CD14-positive monocyte (primary cell): ENCODE measurements at regions of chr1 and their contacts with region 1.

Region 1: GRCh38 chr1:231757101-231757404 is 130.5 kb downstream of the DISC1 start:
- DNase-seq: peak in 1 of 3 donors; percentile 68
- H3K4me3 ChIP-seq: peak overlapping the region; percentile 16 to 71 (median 59)
- H3K4me3 Mint-ChIP-seq: peak overlapping the region; percentile 70 to 79
- H3K27ac ChIP-seq: peak overlapping the region in 1 of 2 donors; percentile 78
- H3K27ac Mint-ChIP-seq: peak overlapping the region; percentile 30 to 91 (median 86)
- H3K4me1 ChIP-seq: peaks cover 16 to 21% of the 10 kb centered on the region in 2 donors
- H3K4me1 Mint-ChIP-seq: peaks cover 22% of the 10 kb centered on the region
- H3K27me3 ChIP-seq: no peaks in the 10 kb centered on the region
- H3K27me3 Mint-ChIP-seq: no peaks in the 10 kb centered on the region
- CTCF ChIP-seq: peak; percentile 69

Region 2: DNA sequence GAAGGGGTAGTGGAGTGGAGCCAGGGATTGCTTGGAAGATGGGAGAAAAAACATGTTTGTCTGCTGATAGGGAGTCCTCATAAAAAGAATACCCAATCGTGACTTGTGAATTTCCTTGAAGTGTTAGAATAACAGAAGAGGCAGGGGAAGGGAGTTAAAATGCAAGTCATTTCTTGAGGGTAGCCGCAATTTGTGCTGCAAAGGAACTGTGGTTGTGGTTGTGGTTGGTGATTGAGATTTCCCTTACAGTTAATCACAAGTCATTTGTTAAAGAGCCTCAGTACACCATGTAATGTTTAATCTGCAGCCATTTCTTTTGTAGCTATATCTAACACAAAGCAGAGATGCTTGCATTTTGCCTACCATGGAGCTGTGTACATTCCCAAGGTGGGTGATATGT is 296.4 kb before region 1 on chr1:
- intact Hi-C with region 1: no loop called
- DNase-seq: peak; percentile 53 to 71 (median 58)
- H3K4me3 ChIP-seq: no peak overlapping the region
- H3K4me3 Mint-ChIP-seq: peak overlapping the region in 1 of 2 donors; percentile 77
- H3K27ac ChIP-seq: no peak overlapping the region
- H3K27ac Mint-ChIP-seq: peak overlapping the region in 1 of 7 donors; percentile 7
- H3K4me1 ChIP-seq: peaks cover 13 to 16% of the 10 kb centered on the region in 2 donors
- H3K4me1 Mint-ChIP-seq: peaks cover 17% of the 10 kb centered on the region
- H3K27me3 ChIP-seq: peaks cover 87 to 96% of the 10 kb centered on the region in 2 donors
- H3K27me3 Mint-ChIP-seq: peaks cover 83 to 92% (median 88%) of the 10 kb centered on the region in 3 donors
- CTCF ChIP-seq: no peak

Region 3: GRCh38 chr1:231684356-231685244 is 72.5 kb before region 1 on chr1:
- intact Hi-C with region 1: no loop called
- DNase-seq: no peak
- H3K4me3 ChIP-seq: no peak overlapping the region
- H3K4me3 Mint-ChIP-seq: no peak overlapping the region
- H3K27ac ChIP-seq: no peak overlapping the region
- H3K27ac Mint-ChIP-seq: peak overlapping the region in 1 of 7 donors; percentile 25
- H3K4me1 ChIP-seq: no peaks in the 10 kb centered on the region
- H3K4me1 Mint-ChIP-seq: peaks cover 18% of the 10 kb centered on the region
- H3K27me3 ChIP-seq: no peaks in the 10 kb centered on the region
- H3K27me3 Mint-ChIP-seq: peaks cover 0 to 2% (median 0%) of the 10 kb centered on the region in 3 donors
- CTCF ChIP-seq: no peak

Region 4: DNA sequence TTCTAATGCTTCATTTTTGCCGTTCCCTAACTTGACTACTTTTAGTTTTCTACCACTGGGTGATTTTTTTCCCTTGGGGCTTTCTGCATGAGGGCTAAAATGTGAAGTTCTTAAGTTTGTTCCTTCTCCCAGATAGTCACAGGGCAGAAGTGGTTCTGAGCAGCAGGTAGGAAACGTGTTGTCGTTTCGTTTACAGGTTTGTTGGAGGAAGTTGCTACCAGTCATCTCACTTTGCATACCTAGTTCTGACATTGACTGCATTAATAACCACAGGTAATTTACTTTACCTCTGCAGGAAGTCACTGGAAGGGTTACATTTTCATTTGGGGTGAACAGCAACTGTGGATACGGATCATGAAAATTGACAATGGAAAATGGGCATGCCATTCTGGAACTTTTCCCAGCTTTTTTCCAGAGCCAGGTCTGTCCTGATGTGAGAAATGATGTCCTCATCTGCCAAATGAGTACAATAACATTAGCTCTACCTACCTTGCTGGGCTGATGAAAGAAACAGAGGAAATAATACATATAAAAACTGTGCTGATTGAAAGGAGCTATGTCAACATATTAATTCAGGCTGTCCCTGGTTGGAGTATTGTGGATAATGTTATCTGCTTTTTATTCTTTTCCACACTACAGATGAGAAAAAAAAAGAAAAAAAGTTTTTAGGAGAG is 36.3 kb before region 1 on chr1:
- intact Hi-C with region 1: no loop called
- DNase-seq: no peak
- H3K4me3 ChIP-seq: no peak overlapping the region
- H3K4me3 Mint-ChIP-seq: no peak overlapping the region
- H3K27ac ChIP-seq: no peak overlapping the region
- H3K27ac Mint-ChIP-seq: peak overlapping the region in 1 of 7 donors; percentile 55
- H3K4me1 ChIP-seq: peaks cover 10% of the 10 kb centered on the region in 2 donors
- H3K4me1 Mint-ChIP-seq: peaks cover 13% of the 10 kb centered on the region
- H3K27me3 ChIP-seq: no peaks in the 10 kb centered on the region
- H3K27me3 Mint-ChIP-seq: peaks cover 0 to 1% (median 0%) of the 10 kb centered on the region in 3 donors
- CTCF ChIP-seq: no peak

Region 5: DNA sequence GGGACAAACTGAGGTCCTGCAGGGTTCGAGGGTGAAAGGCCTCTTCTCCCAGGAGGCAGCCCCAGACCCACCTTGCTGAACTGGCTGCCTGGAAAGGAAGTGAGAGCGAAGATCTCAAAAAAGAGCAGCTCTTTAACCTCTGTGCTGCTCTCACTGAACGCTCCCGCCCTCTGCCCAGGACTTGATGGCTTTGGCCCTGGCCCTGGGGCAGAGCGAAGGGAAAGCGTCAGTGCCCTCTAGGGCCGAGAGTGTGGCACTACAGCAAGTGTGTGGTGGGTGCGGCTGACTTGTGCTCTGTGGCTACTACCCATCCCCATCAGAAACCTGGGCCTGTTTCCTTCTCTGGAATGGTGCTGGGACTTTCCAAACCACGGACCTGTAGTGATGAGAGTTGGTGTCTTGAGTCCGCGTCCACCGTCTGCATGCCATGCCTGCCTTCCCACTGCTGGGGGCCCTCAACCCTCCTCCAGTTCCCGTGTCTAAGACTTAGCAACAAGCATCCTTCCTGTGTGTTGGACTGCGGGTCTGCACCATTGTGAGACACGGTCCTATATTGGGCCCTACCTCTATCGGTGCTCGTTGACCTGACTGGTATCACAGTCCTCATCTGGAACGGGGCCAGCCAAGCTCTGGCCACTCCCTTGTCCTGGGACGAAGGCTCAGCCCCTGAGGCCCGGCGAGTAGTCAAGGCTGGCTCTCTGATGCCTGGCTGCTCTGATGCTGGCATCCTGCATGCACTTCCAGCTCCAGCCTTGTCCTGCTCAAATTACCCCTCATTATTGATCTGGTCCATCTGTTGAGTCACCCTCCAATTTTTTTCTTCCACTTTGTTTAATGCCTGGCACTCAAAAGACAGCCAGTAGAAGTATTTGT is 49.8 kb after region 1 on chr1:
- intact Hi-C with region 1: loop called (anchors 2 to 5 kb)
- DNase-seq: peak; percentile 62 to 76 (median 73)
- H3K4me3 ChIP-seq: no peak overlapping the region
- H3K4me3 Mint-ChIP-seq: no peak overlapping the region
- H3K27ac ChIP-seq: peak overlapping the region in 1 of 2 donors; percentile 91
- H3K27ac Mint-ChIP-seq: peak overlapping the region in 6 of 7 donors; percentile 33 to 86 (median 65)
- H3K4me1 ChIP-seq: peaks cover 56 to 59% of the 10 kb centered on the region in 2 donors
- H3K4me1 Mint-ChIP-seq: peaks cover 57% of the 10 kb centered on the region
- H3K27me3 ChIP-seq: no peaks in the 10 kb centered on the region
- H3K27me3 Mint-ChIP-seq: peaks cover 0 to 4% (median 1%) of the 10 kb centered on the region in 3 donors
- CTCF ChIP-seq: peak; percentile 92